ENCODE measurements at regions of chr5 and their contacts with region 1.

Region 1: GRCh38 chr5:22889718-22890117 is 36.6 kb upstream of the CDH12 start:
- DNase-seq: no peak
- H3K4me3 Mint-ChIP-seq: no peak overlapping the region
- H3K27ac Mint-ChIP-seq: no peak overlapping the region
- H3K4me1 Mint-ChIP-seq: no peaks in the 10 kb centered on the region
- H3K27me3 Mint-ChIP-seq: no peaks in the 10 kb centered on the region
- CTCF ChIP-seq: no peak

Region 2: DNA sequence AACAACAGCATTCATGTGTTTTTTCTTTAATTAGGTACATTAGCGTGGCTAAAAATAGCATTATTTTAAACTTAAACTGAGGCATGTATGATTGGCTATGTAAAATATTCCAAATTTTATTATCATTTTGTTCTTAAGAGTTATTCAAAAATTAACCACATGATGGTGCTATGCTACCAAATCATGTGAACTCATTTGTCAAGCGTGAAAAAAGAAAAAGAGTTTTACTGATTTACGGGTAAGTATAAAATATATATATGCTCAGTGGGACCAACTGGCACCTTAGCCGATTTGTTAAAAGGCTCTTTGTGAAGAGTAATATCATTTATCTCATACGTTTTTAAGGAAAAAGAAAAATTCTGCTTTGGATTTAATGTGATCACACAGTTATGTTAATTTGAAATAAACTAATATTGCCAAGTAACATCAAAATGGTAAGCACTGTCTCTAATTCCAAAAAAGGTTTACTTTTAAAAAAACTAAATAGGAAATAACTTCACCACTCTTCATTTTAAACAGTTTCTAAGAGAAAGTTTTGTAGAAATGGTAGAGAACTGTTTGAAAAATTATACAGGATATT is 1078.9 kb before region 1 on chr5:
- CTCF ChIA-PET with region 1: no interaction called
- intact Hi-C with region 1: loop called (anchors 10 kb)
- DNase-seq: no peak
- H3K4me3 Mint-ChIP-seq: no peak overlapping the region
- H3K27ac Mint-ChIP-seq: no peak overlapping the region
- H3K4me1 Mint-ChIP-seq: peaks cover 22% of the 10 kb centered on the region
- H3K27me3 Mint-ChIP-seq: no peaks in the 10 kb centered on the region
- CTCF ChIP-seq: peak; percentile 20

Region 3: GRCh38 chr5:23139338-23140171 is 249.8 kb after region 1 on chr5:
- CTCF ChIA-PET with region 1: no interaction called
- intact Hi-C with region 1: loop called (anchors 5 kb)
- DNase-seq: no peak
- H3K4me3 Mint-ChIP-seq: no peak overlapping the region
- H3K27ac Mint-ChIP-seq: no peak overlapping the region
- H3K4me1 Mint-ChIP-seq: no peaks in the 10 kb centered on the region
- H3K27me3 Mint-ChIP-seq: no peaks in the 10 kb centered on the region
- CTCF ChIP-seq: no peak